Esophagus muscularis mucosa (tissue), 4 donors: ENCODE measurements at regions of chr6 and their contacts with region 1.

Region 1: DNA sequence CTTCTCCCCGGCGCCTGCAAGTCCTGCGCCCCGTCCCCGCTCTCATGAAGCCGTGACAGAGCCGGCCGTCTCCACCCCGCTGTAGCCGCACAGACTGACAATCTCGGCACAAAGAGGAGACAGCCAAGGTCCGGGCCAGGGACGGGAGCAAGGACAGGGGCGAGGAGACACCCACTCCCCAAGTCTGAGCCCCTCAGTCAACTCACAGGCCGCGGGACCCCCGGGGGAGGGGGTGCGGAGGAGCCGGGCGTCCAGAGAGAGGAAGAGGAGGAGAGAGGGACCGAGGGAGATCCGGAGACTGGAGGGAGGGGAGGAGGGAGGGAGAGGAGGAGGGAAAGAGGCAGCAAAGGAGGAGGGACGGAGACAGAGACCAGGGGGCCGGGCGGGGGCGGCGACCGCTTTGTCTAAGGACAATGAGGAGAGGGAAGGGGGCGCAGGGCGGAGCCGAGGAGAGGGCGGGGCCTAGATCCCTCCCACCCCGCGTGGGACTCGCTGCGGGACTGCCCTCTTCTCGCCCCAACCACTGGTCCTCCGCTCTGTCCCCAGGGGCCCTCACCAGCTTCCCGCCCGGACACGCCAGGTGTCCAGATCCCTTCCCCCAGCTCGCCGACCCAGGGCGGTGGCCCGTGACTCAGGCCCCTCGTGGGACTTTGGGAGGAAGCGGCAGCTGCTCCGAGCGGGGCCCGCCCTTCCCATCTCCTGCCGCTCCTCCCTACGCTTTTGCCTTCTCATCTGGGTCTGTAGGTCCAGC is 638 bp upstream of the PPP1R18 start:
- DNase-seq: peak; percentile 99
- H3K4me3 ChIP-seq: peak overlapping the region; percentile 70 to 93 (median 80)
- H3K27ac ChIP-seq: peak overlapping the region; percentile 95 to 99 (median 97)
- H3K4me1 ChIP-seq: peaks cover 53 to 84% (median 80%) of the 10 kb centered on the region in 4 donors
- H3K27me3 ChIP-seq: no peaks in the 10 kb centered on the region
- CTCF ChIP-seq: no peak
- EP300 ChIP-seq: peak; percentile 36
- POLR2A ChIP-seq: no peak

Region 2: GRCh38 chr6:30883685-30884520 is 196.8 kb after region 1 on chr6 and contains the start of gene DDR1:
- intact Hi-C with region 1: loop called (anchors 10 kb)
- DNase-seq: no peak
- H3K4me3 ChIP-seq: peak within 1 kb of the TSS; percentile 67 to 87 (median 77)
- H3K27ac ChIP-seq: peak within 1 kb of the TSS; percentile 85 to 93 (median 90)
- H3K4me1 ChIP-seq: peaks cover 34 to 57% (median 52%) of the 10 kb centered on the region in 4 donors
- H3K27me3 ChIP-seq: no peaks in the 10 kb centered on the region
- CTCF ChIP-seq: no peak
- EP300 ChIP-seq: no peak
- POLR2A ChIP-seq: no peak
- total RNA-seq, gene DDR1: 10.4 to 37.9 (median 23.3) TPM